Esophagus muscularis mucosa (tissue), 4 donors: ENCODE measurements at regions of chr10 and their contacts with region 1.

Region 1: DNA sequence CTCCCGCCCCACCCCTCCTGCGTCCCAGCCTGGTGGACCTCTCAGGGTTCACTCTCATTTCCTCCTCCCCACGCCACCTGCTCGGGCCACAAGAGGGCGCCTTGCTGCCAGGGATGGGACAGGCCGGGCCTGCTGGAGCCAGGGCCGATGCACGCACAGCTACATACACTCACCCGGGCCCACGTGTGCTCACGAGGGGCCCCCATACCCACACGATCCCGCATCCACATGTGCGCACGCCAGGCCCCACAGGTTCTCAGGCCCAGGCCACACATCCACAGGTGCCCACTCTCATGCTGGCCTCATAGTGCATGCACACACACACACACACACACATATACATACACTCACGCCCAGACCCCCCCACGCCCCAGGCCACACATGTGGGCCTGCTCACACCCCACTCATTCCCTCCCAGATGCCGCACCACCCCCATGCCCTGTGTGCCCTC is 68.6 kb downstream of the LHPP start:
- DNase-seq: peak; percentile 95
- H3K4me3 ChIP-seq: no peak overlapping the region
- H3K27ac ChIP-seq: no peak overlapping the region
- H3K4me1 ChIP-seq: peaks cover 0 to 25% (median 15%) of the 10 kb centered on the region in 4 donors
- H3K27me3 ChIP-seq: no peaks in the 10 kb centered on the region
- CTCF ChIP-seq: peak; percentile 79 to 99 (median 83)
- EP300 ChIP-seq: no peak
- POLR2A ChIP-seq: no peak

Region 2: DNA sequence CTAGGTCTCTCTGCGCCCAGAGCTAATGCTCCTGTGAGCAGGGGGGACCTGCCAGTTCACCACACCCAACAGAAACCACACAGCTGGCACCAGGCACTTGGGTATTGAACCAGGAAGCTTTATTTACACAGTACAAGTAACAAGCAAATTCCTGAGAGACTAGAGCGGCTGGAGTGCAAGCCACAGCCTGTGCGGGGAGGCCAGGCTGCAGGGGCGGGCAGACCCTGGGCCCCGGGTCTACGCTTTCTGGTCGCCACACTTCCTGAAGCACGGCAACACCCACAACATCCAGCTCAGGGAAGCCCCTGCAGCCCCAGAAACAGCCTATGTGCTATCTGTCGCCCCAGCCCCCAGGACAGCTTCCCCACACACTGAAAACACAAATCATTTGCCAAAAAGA is 89.0 kb after region 1 on chr10:
- intact Hi-C with region 1: no loop called
- DNase-seq: no peak
- H3K4me3 ChIP-seq: no peak overlapping the region
- H3K27ac ChIP-seq: no peak overlapping the region
- H3K4me1 ChIP-seq: peaks cover 20 to 33% (median 24%) of the 10 kb centered on the region in 4 donors
- H3K27me3 ChIP-seq: no peaks in the 10 kb centered on the region
- CTCF ChIP-seq: no peak
- EP300 ChIP-seq: no peak
- POLR2A ChIP-seq: no peak

Region 3: DNA sequence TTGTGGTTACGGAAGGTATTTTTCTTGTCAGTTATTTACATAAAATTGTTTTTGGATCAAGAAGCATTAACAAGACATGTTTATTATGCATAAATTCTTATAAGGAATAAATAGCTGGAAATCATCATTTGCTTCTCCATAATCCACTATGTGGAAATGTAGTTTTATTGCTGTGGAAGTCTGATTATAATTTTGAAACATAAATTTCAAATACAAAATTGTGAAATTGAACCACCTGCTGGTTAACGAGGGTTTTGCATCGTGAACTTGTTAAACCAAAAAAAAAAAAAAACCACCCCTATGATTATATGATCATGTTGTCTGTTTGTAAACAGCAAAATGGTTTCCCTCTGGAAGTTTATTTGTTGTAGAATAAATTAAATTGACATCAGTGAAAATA is 297.2 kb after region 1 on chr10:
- intact Hi-C with region 1: loop called (anchors 5 kb)
- DNase-seq: no peak
- H3K4me3 ChIP-seq: no peak overlapping the region
- H3K27ac ChIP-seq: no peak overlapping the region
- H3K4me1 ChIP-seq: no peaks in the 10 kb centered on the region
- H3K27me3 ChIP-seq: no peaks in the 10 kb centered on the region
- CTCF ChIP-seq: peak; percentile 47 to 63 (median 47)
- EP300 ChIP-seq: no peak
- POLR2A ChIP-seq: no peak